ENCODE measurements at regions of chr12 and their contacts with region 1.

Region 1: GRCh38 chr12:89244536-89244935 is 107.8 kb downstream of the DUSP6 start:
- DNase-seq: peak in 15 of 35 experiments; percentile 7 to 49 (median 19)
- ATAC-seq: peak; percentile 64 to 72 (median 70)
- H3K4me3 ChIP-seq: peak overlapping the region in 1 of 2 donors; percentile 47
- H3K4me3 Mint-ChIP-seq: peak overlapping the region; percentile 26 to 48 (median 44)
- H3K27ac ChIP-seq: no peak overlapping the region
- H3K27ac Mint-ChIP-seq: peak overlapping the region; percentile 16 to 35
- H3K4me1 ChIP-seq: peaks cover 26 to 28% of the 10 kb centered on the region in 2 experiments
- H3K4me1 Mint-ChIP-seq: peaks cover 33 to 48% (median 39%) of the 10 kb centered on the region in 3 donors
- H3K27me3 ChIP-seq: no peaks in the 10 kb centered on the region
- H3K27me3 Mint-ChIP-seq: no peaks in the 10 kb centered on the region

Region 2: GRCh38 chr12:89225808-89226411 is 18.6 kb before region 1 on chr12:
- CTCF ChIA-PET with region 1: interaction called in 1 of 2 experiments, 15 read pairs
- POLR2A ChIA-PET with region 1: interaction called in 1 of 2 experiments, 9 read pairs
- DNase-seq: no peak
- ATAC-seq: peak; percentile 32 to 53 (median 46)
- H3K4me3 ChIP-seq: no peak overlapping the region
- H3K4me3 Mint-ChIP-seq: peak overlapping the region in 2 of 3 donors; percentile 25 to 49
- H3K27ac ChIP-seq: peak overlapping the region; percentile 52
- H3K27ac Mint-ChIP-seq: peak overlapping the region; percentile 8 to 84
- H3K4me1 ChIP-seq: peaks cover 13 to 18% of the 10 kb centered on the region in 2 experiments
- H3K4me1 Mint-ChIP-seq: peaks cover 38 to 44% (median 41%) of the 10 kb centered on the region in 3 donors
- H3K27me3 ChIP-seq: peaks cover 0 to 2% of the 10 kb centered on the region in 2 experiments
- H3K27me3 Mint-ChIP-seq: no peaks in the 10 kb centered on the region

Measured in T-cell (primary cell).